ENCODE measurements at regions of chr22 and their contacts with region 1.

Region 1: DNA sequence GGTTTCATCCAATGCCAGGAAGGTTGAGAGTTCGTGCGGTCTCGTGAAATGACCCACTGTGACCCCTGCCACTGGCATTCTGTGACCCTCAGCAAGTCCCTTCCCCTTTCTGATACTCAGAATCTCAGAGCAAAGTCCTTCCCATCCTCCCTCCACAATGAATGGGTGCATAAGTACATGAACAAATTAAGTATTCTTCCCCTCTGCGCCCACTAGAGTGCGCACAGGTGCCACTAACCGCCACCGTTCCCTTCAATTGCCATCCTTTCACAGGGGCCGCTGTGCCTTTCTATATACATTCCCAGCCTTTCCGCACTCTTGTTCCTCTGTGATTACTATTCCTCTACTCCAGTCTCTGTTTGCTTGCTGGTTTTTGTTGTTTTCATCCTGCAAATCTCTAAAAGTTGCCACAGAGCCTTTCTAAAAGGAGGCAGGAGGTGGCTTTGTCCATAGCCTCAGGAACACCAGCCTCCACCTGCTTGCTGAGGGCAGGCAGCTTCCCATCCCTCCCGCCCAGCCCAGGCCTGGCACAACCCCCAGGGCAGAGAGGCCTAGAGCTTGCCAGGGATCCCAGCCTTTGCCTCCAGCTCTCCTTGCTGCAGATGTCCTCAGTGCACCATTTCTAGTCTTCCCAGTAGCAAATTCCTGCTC is 6.7 kb upstream of the AP1B1 start:
- DNase-seq: no peak
- H3K4me3 ChIP-seq: no peak overlapping the region
- H3K27ac ChIP-seq: no peak overlapping the region
- H3K4me1 ChIP-seq: peaks cover 0 to 8% (median 6%) of the 10 kb centered on the region in 4 donors
- H3K27me3 ChIP-seq: no peaks in the 10 kb centered on the region
- CTCF ChIP-seq: peak; percentile 71 to 84 (median 76)
- EP300 ChIP-seq: no peak
- POLR2A ChIP-seq: no peak

Region 2: GRCh38 chr22:29267858-29268417 is 127.1 kb before region 1 on chr22 and contains the starts of genes EWSR1 and RHBDD3:
- intact Hi-C with region 1: no loop called
- DNase-seq: peak; percentile 98
- H3K4me3 ChIP-seq: peak within 1 kb of the TSS; percentile 73 to 99 (median 90)
- H3K27ac ChIP-seq: peak within 1 kb of the TSS; percentile 96 to 100 (median 98)
- H3K4me1 ChIP-seq: peaks cover 46 to 60% (median 57%) of the 10 kb centered on the region in 4 donors
- H3K27me3 ChIP-seq: no peaks in the 10 kb centered on the region
- CTCF ChIP-seq: peak in 1 of 3 experiments; percentile 17
- EP300 ChIP-seq: no peak
- POLR2A ChIP-seq: peak; percentile 74
- total RNA-seq, gene EWSR1: 183 to 203 (median 198) TPM
- total RNA-seq, gene RHBDD3: 12.6 to 23.5 (median 20.7) TPM

Region 3: DNA sequence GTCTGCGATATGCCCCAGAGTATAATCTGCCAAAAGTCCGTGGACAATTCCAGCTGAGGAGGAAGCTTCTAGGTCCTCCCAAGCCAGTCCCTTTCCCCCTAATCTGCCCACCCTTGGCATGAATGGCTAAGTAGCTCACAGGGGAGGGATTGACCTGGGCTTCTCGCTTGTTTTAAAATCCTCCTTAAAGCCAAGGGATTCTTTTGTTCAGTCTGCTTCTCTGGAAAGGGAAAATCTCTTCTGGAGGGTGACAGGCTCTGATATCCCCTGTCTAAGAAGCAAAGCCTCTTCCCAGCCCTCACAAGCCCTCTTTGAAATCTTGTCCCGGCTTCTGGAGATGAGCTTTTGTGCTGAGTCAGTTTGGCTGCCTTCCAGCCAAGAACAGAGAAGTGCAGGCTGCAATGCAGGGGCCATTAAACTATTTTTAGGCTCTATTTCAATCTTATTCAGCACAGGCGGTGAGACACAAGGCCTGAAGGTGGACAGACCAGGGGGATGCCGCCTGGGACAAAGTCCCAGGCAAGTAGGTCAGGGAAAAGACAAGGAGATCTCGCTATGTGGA is 108.8 kb after region 1 on chr22:
- intact Hi-C with region 1: no loop called
- DNase-seq: no peak
- H3K4me3 ChIP-seq: no peak overlapping the region
- H3K27ac ChIP-seq: peak overlapping the region in 3 of 4 donors; percentile 18 to 46 (median 43)
- H3K4me1 ChIP-seq: peaks cover 0 to 11% (median 10%) of the 10 kb centered on the region in 4 donors
- H3K27me3 ChIP-seq: no peaks in the 10 kb centered on the region
- CTCF ChIP-seq: no peak
- EP300 ChIP-seq: no peak
- POLR2A ChIP-seq: no peak

Region 4: GRCh38 chr22:29524440-29525191 is 129.6 kb after region 1 on chr22:
- intact Hi-C with region 1: loop called (anchors 10 kb)
- DNase-seq: no peak
- H3K4me3 ChIP-seq: no peak overlapping the region
- H3K27ac ChIP-seq: no peak overlapping the region
- H3K4me1 ChIP-seq: no peaks in the 10 kb centered on the region
- H3K27me3 ChIP-seq: no peaks in the 10 kb centered on the region
- CTCF ChIP-seq: peak in 2 of 3 experiments; percentile 11 to 35
- EP300 ChIP-seq: no peak
- POLR2A ChIP-seq: no peak